ENCODE measurements at regions of chr19 and their contacts with region 1.

Region 1: DNA sequence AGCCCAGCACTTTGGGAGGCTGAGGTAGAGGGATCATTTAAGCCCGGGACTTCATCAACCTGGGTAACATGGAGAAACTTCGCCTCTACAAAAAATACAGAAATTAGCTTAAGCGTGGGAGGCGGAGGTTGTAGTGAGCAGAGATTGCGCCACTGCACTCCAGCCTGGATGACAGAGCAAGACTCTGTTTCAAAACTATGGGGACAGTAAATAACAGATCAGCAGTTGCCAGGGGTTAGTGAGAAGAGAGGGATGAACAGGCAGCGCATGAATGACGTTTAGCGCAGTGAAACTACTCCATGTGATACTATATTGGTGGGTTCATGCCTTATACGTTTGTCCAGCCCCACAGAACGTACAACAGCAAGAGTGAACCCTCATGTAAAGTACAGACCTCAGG is 7.1 kb upstream of the ICAM3 start:
- DNase-seq: peak; percentile 87 to 92 (median 91)
- H3K4me3 ChIP-seq: peak overlapping the region in 1 of 3 experiments; percentile 48
- H3K4me3 Mint-ChIP-seq: peak overlapping the region; percentile 53 to 67
- H3K27ac ChIP-seq: peak overlapping the region; percentile 93 to 96
- H3K27ac Mint-ChIP-seq: peak overlapping the region; percentile 97 to 99 (median 99)
- H3K4me1 ChIP-seq: peaks cover 28 to 32% of the 10 kb centered on the region in 2 donors
- H3K4me1 Mint-ChIP-seq: peaks cover 23% of the 10 kb centered on the region
- H3K27me3 ChIP-seq: no peaks in the 10 kb centered on the region
- H3K27me3 Mint-ChIP-seq: peaks cover 0 to 2% (median 1%) of the 10 kb centered on the region in 3 donors
- CTCF ChIP-seq: no peak

Region 2: DNA sequence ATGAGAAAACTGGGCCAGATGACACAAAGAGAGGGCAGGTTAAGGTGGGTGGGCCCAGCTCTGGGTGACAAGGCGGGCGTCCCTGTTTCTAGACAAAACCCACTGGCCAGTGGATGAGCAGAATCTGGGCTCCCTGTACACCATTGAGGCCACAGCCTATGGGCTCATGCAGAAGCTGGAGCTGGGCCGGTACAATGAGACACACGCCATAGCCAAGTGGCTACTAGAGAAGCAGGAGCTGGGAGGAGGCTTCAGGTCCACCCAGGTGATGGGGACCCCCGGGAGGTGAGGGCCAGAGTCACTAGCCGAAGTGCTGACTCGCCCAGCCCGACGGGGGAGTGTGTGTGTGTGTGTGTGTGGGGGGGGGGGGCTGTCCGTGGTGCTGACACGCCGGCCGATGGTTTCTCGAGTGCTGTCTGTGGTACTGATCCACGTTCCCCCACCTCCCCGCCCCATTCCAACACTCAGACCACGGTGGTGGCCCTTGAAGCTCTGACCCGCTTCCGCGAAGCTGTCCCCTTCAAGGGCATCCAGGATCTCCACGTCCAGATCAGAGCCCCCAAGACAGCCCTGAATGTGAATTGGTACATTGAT is 284.7 kb before region 1 on chr19:
- intact Hi-C with region 1: no loop called
- DNase-seq: no peak
- H3K4me3 ChIP-seq: no peak overlapping the region
- H3K4me3 Mint-ChIP-seq: peak overlapping the region in 1 of 2 donors; percentile 47
- H3K27ac ChIP-seq: no peak overlapping the region
- H3K27ac Mint-ChIP-seq: no peak overlapping the region
- H3K4me1 ChIP-seq: no peaks in the 10 kb centered on the region
- H3K4me1 Mint-ChIP-seq: no peaks in the 10 kb centered on the region
- H3K27me3 ChIP-seq: no peaks in the 10 kb centered on the region
- H3K27me3 Mint-ChIP-seq: peaks cover 11 to 32% (median 14%) of the 10 kb centered on the region in 3 donors
- CTCF ChIP-seq: no peak

Region 3: DNA sequence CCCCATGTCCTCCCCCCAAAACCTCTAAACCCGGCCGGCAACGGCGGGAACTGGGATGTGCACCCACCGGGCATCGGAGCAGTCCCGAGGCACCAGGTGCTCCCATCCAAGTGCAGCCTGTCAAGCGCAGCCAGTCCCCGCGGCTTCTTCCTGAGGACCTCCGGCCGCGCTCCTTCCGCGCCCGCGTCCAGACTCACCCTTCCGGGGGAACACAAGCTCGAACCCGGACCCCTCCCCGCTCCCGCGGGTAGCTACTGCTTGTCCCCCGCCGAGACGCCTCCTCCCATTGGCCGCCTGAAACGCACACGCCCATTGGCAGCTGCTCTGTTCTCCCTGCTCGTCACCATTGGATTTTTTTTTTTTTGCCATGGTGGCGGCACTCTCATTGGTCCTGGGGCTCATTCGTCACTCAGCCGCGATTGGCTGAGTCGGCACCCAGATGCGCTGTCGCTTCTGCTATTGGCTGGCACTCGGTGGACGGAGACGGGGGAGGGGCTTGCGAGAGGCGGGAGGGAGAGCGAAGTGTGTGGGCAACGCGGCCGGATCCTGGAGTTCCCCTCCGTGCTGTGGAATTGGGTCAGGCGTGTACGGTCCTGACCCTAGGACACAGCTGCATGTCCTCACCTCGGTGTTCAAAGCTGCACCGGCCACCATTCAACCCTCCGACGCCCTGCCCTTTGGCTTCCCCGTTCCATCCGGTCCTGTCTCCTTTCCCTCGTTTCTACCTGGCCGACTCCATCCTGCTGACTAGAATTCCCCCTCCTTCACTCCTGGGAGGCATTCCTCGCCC is 34.0 kb after region 1 on chr19 and contains the start of gene TYK2:
- intact Hi-C with region 1: loop called in 1 of 2 experiments (anchors 5 kb)
- DNase-seq: peak; percentile 98 to 99 (median 99)
- H3K4me3 ChIP-seq: peak within 1 kb of the TSS; percentile 84 to 98 (median 87)
- H3K4me3 Mint-ChIP-seq: peak within 1 kb of the TSS; percentile 93 to 95
- H3K27ac ChIP-seq: peak within 1 kb of the TSS; percentile 91 to 98
- H3K27ac Mint-ChIP-seq: peak within 1 kb of the TSS; percentile 95 to 100 (median 98)
- H3K4me1 ChIP-seq: peaks cover 48 to 52% of the 10 kb centered on the region in 2 donors
- H3K4me1 Mint-ChIP-seq: peaks cover 39% of the 10 kb centered on the region
- H3K27me3 ChIP-seq: no peaks in the 10 kb centered on the region
- H3K27me3 Mint-ChIP-seq: peaks cover 0 to 2% (median 2%) of the 10 kb centered on the region in 3 donors
- CTCF ChIP-seq: no peak
- polyA plus RNA-seq, gene TYK2: 82.9 to 441 (median 113) TPM

Measured in CD14-positive monocyte (primary cell).